Activated CD4-positive, alpha-beta T cell treated with anti-CD3 and anti-CD28 coated beads, Interleukin-2, amount 10 ng/mL, durations not matched to agents 24 days and 14 days (primary cell): ENCODE measurements at regions of chr3 and their contacts with region 1.

Region 1: DNA sequence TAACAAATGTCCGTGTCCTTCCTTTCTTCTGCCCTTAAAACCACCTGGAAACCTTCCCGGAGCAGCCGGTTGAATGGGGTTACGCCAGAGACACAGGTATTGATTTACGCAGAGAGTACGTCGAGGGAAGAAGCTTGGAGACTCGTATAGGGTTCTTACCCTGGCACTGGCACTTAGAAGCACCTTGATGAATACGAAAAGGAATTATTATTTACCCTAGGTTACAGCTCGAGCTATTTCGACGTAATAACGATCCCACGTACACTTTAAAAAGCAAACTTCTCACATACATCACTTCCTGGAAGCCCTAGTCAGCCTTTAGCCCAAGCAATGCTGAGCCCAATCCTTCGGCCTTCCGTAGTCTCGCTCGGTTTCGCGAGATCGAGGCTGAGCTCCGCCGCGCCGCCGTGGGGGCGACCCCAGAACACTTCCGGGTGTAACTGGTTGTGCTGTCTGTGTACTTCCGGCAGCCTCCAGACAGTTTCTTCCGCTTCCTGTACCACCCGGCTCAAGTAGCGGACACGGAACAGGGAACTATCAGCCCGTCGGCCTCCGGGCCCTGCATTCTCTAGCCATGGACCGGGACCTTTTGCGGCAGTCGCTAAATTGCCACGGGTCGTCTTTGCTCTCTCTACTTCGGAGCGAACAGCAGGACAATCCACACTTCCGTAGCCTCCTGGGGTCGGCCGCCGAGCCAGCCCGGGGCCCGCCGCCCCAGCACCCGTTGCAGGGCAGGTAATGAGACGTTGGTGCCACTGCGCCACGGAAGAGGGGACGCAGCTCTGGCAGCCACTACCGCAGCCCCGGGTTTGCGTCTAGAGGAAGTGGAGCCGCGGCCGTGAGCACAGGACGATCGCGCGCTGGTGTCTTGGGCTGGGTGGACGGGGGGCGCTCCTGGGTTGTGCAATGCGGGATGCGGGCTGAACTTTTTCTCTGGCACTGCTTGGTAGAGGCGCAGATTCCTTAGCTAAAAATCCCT is at the start of gene TTC14:
- DNase-seq: peak; percentile 98
- H3K4me3 Mint-ChIP-seq: peak within 1 kb of the TSS; percentile 99
- H3K27ac Mint-ChIP-seq: peak within 1 kb of the TSS; percentile 96
- H3K4me1 Mint-ChIP-seq: peaks cover 20% of the 10 kb centered on the region
- H3K27me3 Mint-ChIP-seq: peaks cover 13% of the 10 kb centered on the region
- total RNA-seq, gene TTC14: 42.6 and 46.4 TPM in 2 replicates

Region 2: GRCh38 chr3:179604321-179605078 is 997.5 kb before region 1 on chr3 and contains the starts of genes MRPL47 and NDUFB5:
- intact Hi-C with region 1: loop called (anchors 1 kb)
- DNase-seq: peak; percentile 98
- H3K4me3 Mint-ChIP-seq: peak within 1 kb of the TSS; percentile 99
- H3K27ac Mint-ChIP-seq: peak within 1 kb of the TSS; percentile 100
- H3K4me1 Mint-ChIP-seq: peaks cover 34% of the 10 kb centered on the region
- H3K27me3 Mint-ChIP-seq: no peaks in the 10 kb centered on the region
- total RNA-seq, gene MRPL47: 66.6 and 68.2 TPM in 2 replicates
- total RNA-seq, gene NDUFB5: 91.8 and 98.6 TPM in 2 replicates

Region 3: DNA sequence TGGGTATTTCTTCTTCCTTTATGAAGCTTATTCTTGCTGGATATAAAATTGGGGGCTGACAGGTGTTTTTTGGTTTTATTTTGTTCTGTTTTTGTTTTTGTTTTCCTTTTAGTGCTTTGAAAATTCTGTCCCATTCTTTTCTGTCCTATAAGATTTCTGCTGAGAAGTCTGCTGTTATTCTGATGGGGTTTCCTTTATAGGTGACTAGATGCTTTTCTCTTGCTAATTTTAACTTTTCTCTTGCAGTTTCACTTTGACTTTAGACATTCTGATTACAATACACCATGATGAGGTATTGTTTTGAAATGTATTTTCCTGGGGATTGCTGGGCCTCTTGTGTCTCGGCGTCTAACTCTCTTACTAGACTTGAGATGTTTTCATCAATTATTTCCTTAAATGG is 22.7 kb after region 1 on chr3:
- intact Hi-C with region 1: loop called (anchors 1 kb)
- DNase-seq: no peak
- H3K4me3 Mint-ChIP-seq: peak overlapping the region; percentile 41
- H3K27ac Mint-ChIP-seq: peak overlapping the region; percentile 81
- H3K4me1 Mint-ChIP-seq: peaks cover 23% of the 10 kb centered on the region
- H3K27me3 Mint-ChIP-seq: no peaks in the 10 kb centered on the region

Region 4: GRCh38 chr3:180679178-180680096 is 77.5 kb after region 1 on chr3 and contains the start of gene CCDC39:
- intact Hi-C with region 1: no loop called
- DNase-seq: peak; percentile 88
- H3K4me3 Mint-ChIP-seq: peak within 1 kb of the TSS; percentile 90
- H3K27ac Mint-ChIP-seq: peak within 1 kb of the TSS; percentile 10
- H3K4me1 Mint-ChIP-seq: peaks cover 16% of the 10 kb centered on the region
- H3K27me3 Mint-ChIP-seq: peaks cover 52% of the 10 kb centered on the region
- total RNA-seq, gene CCDC39: not detected in 2 replicates

Region 5: GRCh38 chr3:180912304-180913296 is 310.6 kb after region 1 on chr3 and contains the start of gene FXR1:
- intact Hi-C with region 1: loop called (anchors 2 kb)
- DNase-seq: peak; percentile 94
- H3K4me3 Mint-ChIP-seq: peak within 1 kb of the TSS; percentile 98
- H3K27ac Mint-ChIP-seq: peak within 1 kb of the TSS; percentile 97
- H3K4me1 Mint-ChIP-seq: peaks cover 29% of the 10 kb centered on the region
- H3K27me3 Mint-ChIP-seq: no peaks in the 10 kb centered on the region
- total RNA-seq, gene FXR1: 149 and 161 TPM in 2 replicates